ENCODE measurements at regions of chr11 and their contacts with region 1.

Region 1: DNA sequence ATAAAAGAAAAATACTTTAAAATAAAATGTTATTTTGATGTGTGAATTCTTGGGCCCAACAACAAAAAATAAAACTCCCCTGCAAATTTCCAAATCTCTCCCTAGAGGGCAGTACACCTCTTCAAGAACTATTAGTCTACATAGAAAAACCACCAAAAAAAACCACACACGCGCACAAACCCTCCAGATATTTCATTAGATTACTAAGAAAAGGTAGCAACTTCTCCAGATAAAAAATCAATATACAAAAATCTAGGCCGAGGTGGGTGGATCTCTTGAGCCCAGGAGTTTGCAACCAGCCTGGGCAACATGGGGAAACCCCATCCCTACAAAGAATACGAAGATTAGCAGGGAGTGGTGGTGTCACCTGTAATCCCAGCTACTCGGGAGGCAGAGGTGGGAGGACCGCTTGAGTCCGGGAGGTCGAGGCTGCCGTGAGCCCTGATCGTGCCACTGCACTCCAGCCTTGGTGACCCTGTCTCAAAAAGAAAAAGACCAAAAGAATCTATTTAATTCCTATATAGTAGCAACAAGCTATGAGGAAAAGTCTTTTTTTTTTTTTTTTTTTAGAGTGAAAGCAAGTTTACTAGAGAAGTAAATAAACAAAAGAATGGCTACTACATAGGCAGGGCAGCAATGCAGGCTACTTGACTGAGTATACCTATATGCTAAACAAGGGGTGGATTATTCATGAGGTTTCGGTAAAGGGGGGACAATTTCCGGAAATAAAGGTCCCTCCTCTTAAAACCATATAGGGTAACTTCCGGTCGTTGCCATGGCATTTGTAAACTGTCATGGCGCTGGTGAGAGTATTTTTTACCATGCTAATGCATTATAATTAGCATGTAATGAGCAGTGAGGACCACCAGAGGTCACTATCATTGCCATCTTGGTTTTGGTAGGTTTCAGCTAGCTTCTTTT is 13.1 kb downstream of the B3GNT6 start:
- DNase-seq: peak in 8 of 9 donors; percentile 51 to 94 (median 92)
- ATAC-seq: peak; percentile 89
- H3K4me3 ChIP-seq: peak overlapping the region; percentile 70
- H3K4me3 Mint-ChIP-seq: peak overlapping the region; percentile 55 to 82 (median 70)
- H3K27ac ChIP-seq: peak overlapping the region; percentile 60
- H3K27ac Mint-ChIP-seq: peak overlapping the region; percentile 8 to 75 (median 58)
- H3K4me1 ChIP-seq: peaks cover 4 to 14% of the 10 kb centered on the region in 2 donors
- H3K4me1 Mint-ChIP-seq: peaks cover 6 to 17% (median 12%) of the 10 kb centered on the region in 7 donors
- H3K27me3 ChIP-seq: no peaks in the 10 kb centered on the region
- H3K27me3 Mint-ChIP-seq: peaks cover 6 to 25% (median 9%) of the 10 kb centered on the region in 5 donors

Region 2: DNA sequence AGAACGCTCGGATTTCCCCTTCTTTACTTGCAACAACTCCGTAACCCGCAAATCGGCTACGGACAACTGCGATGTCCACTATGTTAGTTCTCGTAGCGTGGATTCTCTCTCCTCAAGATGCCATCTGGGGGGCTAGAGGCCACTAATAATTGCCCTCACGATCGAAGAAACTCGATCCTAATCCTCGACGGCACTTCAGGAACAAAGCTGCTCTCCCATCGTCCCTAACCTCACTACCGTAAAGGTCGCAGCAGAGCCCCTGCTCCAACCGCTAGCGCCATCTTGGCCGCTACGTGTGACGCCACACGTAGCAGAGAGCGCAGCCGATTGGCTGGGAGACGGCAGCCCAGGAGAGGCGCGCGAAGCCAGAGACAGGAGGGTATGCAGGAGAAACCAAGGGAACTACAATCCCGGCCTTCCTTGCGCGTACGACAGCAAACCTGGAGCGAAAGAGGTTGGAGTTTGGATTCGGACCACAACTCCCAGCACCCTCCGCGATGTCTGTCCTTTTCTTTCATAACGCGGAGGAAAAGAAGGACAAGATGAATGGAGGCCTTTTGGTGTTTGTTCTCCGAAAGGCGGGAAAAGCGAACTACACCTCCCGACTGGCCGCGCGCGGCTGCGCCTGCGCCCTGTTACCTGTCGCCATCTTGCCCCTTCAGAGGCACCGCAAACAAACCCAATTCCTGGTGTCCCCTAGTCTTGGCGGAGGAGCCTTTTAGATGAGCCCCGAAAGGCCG is 602.7 kb before region 1 on chr11 and contains the start of gene EMSY:
- CTCF ChIA-PET with region 1: no interaction called
- POLR2A ChIA-PET with region 1: no interaction called
- intact Hi-C with region 1: loop called in 1 of 2 experiments (anchors 1 kb)
- DNase-seq: peak; percentile 73 to 95 (median 92)
- ATAC-seq: peak; percentile 96
- H3K4me3 ChIP-seq: peak within 1 kb of the TSS; percentile 95
- H3K4me3 Mint-ChIP-seq: peak within 1 kb of the TSS; percentile 91 to 99 (median 96)
- H3K27ac ChIP-seq: peak within 1 kb of the TSS; percentile 92
- H3K27ac Mint-ChIP-seq: peak within 1 kb of the TSS; percentile 91 to 98 (median 97)
- H3K4me1 ChIP-seq: peaks cover 12 to 19% of the 10 kb centered on the region in 2 donors
- H3K4me1 Mint-ChIP-seq: peaks cover 29 to 58% (median 44%) of the 10 kb centered on the region in 7 donors
- H3K27me3 ChIP-seq: no peaks in the 10 kb centered on the region
- H3K27me3 Mint-ChIP-seq: no peaks in the 10 kb centered on the region
- total RNA-seq, gene EMSY: 35.5 to 49.0 (median 40.0) TPM

Region 3: DNA sequence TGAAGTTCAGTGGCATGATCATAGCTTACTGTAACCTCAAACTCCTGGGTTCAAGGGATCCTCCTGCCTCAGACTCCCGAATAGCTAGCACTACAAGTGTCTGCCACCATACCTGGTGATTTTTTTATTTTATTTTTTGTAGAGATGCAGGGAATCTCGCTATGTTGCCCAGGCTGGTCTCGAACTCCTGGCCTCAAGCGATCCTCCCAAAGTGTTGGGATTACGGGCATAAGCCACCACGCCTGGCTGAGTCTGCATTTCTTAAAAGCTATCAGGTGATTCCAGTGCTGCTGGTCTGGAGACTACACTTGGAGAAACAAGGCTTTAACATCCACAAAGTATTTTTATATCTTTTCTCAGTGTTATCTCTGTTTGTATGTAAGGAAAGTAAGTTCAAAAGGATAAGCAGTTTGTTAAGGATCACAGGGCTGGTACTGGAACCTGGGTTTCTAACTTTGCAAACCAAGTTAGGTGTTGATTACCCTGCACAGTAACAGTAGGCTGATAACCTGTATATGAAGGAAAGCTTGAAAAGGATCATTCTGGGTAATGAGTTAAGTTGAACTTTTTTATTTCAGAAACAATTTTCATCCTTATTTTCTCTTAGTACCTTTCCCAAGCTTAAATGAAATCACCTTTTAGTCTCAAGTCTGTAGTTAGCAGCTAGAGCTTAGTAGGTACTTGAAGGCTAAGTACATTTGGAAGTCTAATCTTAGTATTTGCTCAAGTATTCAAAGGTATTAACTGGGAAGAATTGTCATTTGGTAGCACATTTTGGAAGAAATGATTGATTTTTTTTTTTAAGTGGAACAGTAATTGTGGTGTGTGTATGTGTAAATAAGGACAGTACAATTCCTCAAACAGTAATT is 174.1 kb before region 1 on chr11:
- CTCF ChIA-PET with region 1: no interaction called
- POLR2A ChIA-PET with region 1: no interaction called
- intact Hi-C with region 1: no loop called
- DNase-seq: no peak
- ATAC-seq: no peak
- H3K4me3 ChIP-seq: no peak overlapping the region
- H3K4me3 Mint-ChIP-seq: no peak overlapping the region
- H3K27ac ChIP-seq: no peak overlapping the region
- H3K27ac Mint-ChIP-seq: no peak overlapping the region
- H3K4me1 ChIP-seq: no peaks in the 10 kb centered on the region
- H3K4me1 Mint-ChIP-seq: peaks cover 0 to 5% (median 0%) of the 10 kb centered on the region in 7 donors
- H3K27me3 ChIP-seq: no peaks in the 10 kb centered on the region
- H3K27me3 Mint-ChIP-seq: no peaks in the 10 kb centered on the region

Region 4: DNA sequence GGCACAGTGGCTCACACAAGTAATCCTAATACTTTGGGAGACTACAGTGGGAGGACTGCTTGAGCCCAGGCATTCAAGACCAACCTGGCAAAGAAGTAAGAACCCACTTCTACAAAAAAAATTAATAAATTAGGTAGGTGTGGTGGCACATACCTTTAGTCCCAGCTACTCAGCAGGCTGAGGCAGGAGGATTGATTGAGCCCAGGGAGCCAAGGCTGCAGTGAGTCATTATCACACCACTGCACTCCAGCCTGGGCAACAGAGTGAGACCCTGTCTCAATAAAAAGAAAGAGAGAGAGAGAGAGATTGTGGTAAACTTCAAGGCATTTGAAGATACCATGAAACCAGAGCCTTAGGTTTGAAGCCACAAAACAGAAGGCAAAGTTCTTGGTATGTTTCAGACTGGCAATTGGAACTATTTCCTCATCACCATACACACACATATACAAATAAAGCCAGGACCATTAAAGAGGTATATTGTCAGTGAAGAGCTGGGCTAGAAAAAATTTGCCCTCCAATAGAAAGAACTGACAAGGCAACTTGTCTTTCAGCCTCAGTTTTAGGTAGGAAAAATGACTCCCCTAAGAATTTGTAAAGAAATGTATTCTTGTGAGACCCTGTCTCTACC is 37.6 kb before region 1 on chr11:
- CTCF ChIA-PET with region 1: no interaction called
- POLR2A ChIA-PET with region 1: no interaction called
- intact Hi-C with region 1: no loop called
- DNase-seq: no peak
- ATAC-seq: no peak
- H3K4me3 ChIP-seq: no peak overlapping the region
- H3K4me3 Mint-ChIP-seq: no peak overlapping the region
- H3K27ac ChIP-seq: no peak overlapping the region
- H3K27ac Mint-ChIP-seq: no peak overlapping the region
- H3K4me1 ChIP-seq: no peaks in the 10 kb centered on the region
- H3K4me1 Mint-ChIP-seq: no peaks in the 10 kb centered on the region
- H3K27me3 ChIP-seq: no peaks in the 10 kb centered on the region
- H3K27me3 Mint-ChIP-seq: no peaks in the 10 kb centered on the region

Region 5: GRCh38 chr11:77066229-77067042 is 19.2 kb after region 1 on chr11 and contains the start of gene CAPN5:
- CTCF ChIA-PET with region 1: interaction called, 4 read pairs
- POLR2A ChIA-PET with region 1: interaction called, 3 read pairs
- intact Hi-C with region 1: loop called (anchors 1 kb)
- DNase-seq: peak; percentile 72 to 93 (median 85)
- ATAC-seq: peak; percentile 98
- H3K4me3 ChIP-seq: peak within 1 kb of the TSS; percentile 73
- H3K4me3 Mint-ChIP-seq: peak within 1 kb of the TSS; percentile 81 to 95 (median 87)
- H3K27ac ChIP-seq: peak within 1 kb of the TSS; percentile 73
- H3K27ac Mint-ChIP-seq: peak within 1 kb of the TSS in 8 of 9 donors; percentile 49 to 95 (median 82)
- H3K4me1 ChIP-seq: peaks cover 0 to 9% of the 10 kb centered on the region in 2 donors
- H3K4me1 Mint-ChIP-seq: peaks cover 5 to 28% (median 21%) of the 10 kb centered on the region in 7 donors
- H3K27me3 ChIP-seq: no peaks in the 10 kb centered on the region
- H3K27me3 Mint-ChIP-seq: peaks cover 0 to 32% (median 0%) of the 10 kb centered on the region in 5 donors
- total RNA-seq, gene CAPN5: 0.94 to 5.8 (median 5.6) TPM

Region 6: DNA sequence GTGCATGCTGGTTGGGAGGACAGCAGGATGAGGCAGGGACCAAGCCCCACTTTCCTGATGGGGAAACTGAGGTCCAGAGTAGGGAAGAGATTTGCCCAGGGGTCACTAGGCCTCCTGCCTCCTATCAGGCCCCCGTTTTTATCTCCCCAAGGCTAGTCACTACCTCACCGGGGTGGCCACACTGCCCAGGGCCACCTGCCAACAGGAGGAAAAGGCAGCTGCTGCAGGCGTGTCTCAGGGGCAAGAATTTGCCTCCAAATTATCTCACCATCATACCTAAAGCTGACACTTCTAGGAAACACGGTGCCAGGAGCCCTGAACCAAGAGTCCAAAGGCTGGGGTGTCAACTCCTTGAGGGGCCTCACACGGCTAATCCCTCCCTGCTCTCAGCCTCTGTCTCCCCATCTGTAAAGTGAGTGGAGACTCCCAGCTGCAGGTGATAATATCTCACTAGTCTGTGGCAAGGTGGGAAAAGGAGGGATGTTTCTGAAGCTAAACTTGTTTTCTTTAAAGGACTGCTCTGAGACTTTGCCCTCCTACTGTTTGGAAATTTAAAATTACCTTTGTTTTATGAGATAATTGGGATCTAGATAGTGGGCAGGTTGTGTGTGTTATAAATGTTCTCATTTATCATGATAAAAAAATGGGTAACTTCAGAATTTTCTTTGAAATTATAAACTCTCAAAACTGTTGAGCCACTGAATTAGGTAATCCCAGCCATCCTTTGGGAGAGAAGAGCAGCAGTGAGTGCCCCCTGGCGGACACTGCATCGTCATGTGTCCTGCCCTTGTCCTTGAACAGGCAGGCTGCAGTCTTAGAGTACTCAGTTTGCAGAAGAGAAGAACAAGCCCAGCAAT is 140.7 kb after region 1 on chr11:
- CTCF ChIA-PET with region 1: no interaction called
- POLR2A ChIA-PET with region 1: no interaction called
- intact Hi-C with region 1: loop called in 1 of 2 experiments (anchors 1 kb)
- DNase-seq: peak in 8 of 9 donors; percentile 22 to 67 (median 40)
- ATAC-seq: peak; percentile 78
- H3K4me3 ChIP-seq: no peak overlapping the region
- H3K4me3 Mint-ChIP-seq: no peak overlapping the region
- H3K27ac ChIP-seq: no peak overlapping the region
- H3K27ac Mint-ChIP-seq: peak overlapping the region in 1 of 9 donors; percentile 11
- H3K4me1 ChIP-seq: no peaks in the 10 kb centered on the region
- H3K4me1 Mint-ChIP-seq: no peaks in the 10 kb centered on the region
- H3K27me3 ChIP-seq: no peaks in the 10 kb centered on the region
- H3K27me3 Mint-ChIP-seq: peaks cover 0 to 4% (median 0%) of the 10 kb centered on the region in 5 donors

Region 7: DNA sequence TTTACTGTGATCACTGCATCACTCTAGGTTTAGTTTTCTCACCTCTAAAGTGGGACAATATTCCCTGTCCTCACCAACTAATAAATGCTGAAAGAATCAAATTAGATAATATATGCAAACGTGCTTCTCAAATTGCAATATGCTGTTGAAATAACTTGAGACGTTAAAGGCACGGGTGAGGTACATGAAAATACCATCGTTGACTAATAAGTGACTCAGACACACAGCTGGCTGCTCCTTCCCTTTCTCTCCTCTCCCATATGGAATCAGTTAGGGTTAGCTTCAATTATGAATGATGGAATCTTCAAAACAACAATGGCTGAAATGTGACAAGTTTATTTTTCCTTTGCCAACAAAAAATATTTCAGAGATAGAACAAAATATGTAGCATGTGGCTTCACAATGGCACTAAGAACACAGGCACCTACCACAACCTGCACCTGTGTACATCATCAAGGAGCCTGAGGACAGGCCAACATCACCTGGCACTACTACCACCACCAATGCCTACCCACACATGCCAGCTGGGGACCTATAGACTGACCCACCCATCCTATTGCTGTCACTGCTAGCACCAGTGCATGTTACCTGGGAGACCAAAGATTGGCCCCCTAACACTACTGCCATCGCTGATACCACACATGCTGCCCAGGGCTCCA is 240.5 kb after region 1 on chr11:
- CTCF ChIA-PET with region 1: no interaction called
- POLR2A ChIA-PET with region 1: no interaction called
- intact Hi-C with region 1: no loop called
- DNase-seq: no peak
- ATAC-seq: no peak
- H3K4me3 ChIP-seq: no peak overlapping the region
- H3K4me3 Mint-ChIP-seq: no peak overlapping the region
- H3K27ac ChIP-seq: no peak overlapping the region
- H3K27ac Mint-ChIP-seq: no peak overlapping the region
- H3K4me1 ChIP-seq: no peaks in the 10 kb centered on the region
- H3K4me1 Mint-ChIP-seq: no peaks in the 10 kb centered on the region
- H3K27me3 ChIP-seq: no peaks in the 10 kb centered on the region
- H3K27me3 Mint-ChIP-seq: peaks cover 20 to 47% (median 31%) of the 10 kb centered on the region in 5 donors

Region 8: DNA sequence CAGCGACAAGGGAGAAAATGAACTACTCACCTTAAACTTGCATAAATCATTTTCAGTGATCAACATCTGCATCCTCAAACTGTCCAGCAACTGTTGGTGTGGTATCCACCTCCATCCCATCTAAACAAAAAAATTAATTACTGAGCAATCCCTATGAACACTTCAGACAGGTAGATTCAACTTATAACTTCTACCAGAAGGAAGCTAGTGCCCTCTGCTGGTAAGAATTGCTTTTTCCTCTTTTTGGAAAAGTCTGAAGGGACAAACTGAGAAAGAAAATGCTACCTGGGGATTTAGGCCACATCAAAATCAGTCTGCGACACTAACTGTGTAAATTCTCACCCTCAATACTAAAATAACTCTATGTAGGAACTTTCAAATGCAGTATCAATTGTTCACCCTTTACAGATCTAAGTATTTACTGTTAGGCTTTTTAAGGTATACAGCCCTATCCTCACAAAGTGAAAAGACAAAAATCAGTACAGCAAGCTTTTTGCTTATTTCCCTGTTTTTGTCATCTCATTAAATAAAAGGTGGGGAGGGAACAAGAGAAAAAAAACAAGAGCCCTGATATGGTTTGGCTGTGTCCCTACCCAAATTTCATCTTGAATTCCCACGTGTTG is 572.4 kb after region 1 on chr11:
- CTCF ChIA-PET with region 1: no interaction called
- POLR2A ChIA-PET with region 1: no interaction called
- intact Hi-C with region 1: loop called (anchors 1 to 2 kb)
- DNase-seq: peak in 7 of 9 donors; percentile 18 to 51 (median 41)
- ATAC-seq: peak; percentile 57
- H3K4me3 ChIP-seq: no peak overlapping the region
- H3K4me3 Mint-ChIP-seq: no peak overlapping the region
- H3K27ac ChIP-seq: no peak overlapping the region
- H3K27ac Mint-ChIP-seq: peak overlapping the region in 1 of 9 donors; percentile 75
- H3K4me1 ChIP-seq: no peaks in the 10 kb centered on the region
- H3K4me1 Mint-ChIP-seq: peaks cover 0 to 2% (median 0%) of the 10 kb centered on the region in 7 donors
- H3K27me3 ChIP-seq: no peaks in the 10 kb centered on the region
- H3K27me3 Mint-ChIP-seq: no peaks in the 10 kb centered on the region

Region 9: GRCh38 chr11:78045851-78046485 is 998.7 kb after region 1 on chr11:
- CTCF ChIA-PET with region 1: no interaction called
- POLR2A ChIA-PET with region 1: no interaction called
- intact Hi-C with region 1: loop called in 1 of 2 experiments (anchors 5 kb)
- DNase-seq: peak; percentile 66 to 92 (median 83)
- ATAC-seq: peak; percentile 97
- H3K4me3 ChIP-seq: peak overlapping the region; percentile 57
- H3K4me3 Mint-ChIP-seq: peak overlapping the region; percentile 49 to 78 (median 73)
- H3K27ac ChIP-seq: no peak overlapping the region
- H3K27ac Mint-ChIP-seq: peak overlapping the region in 4 of 9 donors; percentile 4 to 67 (median 43)
- H3K4me1 ChIP-seq: peaks cover 0 to 10% of the 10 kb centered on the region in 2 donors
- H3K4me1 Mint-ChIP-seq: peaks cover 4 to 17% (median 9%) of the 10 kb centered on the region in 7 donors
- H3K27me3 ChIP-seq: no peaks in the 10 kb centered on the region
- H3K27me3 Mint-ChIP-seq: no peaks in the 10 kb centered on the region